ENCODE measurements at regions of chr6 and their contacts with region 1.

Region 1: DNA sequence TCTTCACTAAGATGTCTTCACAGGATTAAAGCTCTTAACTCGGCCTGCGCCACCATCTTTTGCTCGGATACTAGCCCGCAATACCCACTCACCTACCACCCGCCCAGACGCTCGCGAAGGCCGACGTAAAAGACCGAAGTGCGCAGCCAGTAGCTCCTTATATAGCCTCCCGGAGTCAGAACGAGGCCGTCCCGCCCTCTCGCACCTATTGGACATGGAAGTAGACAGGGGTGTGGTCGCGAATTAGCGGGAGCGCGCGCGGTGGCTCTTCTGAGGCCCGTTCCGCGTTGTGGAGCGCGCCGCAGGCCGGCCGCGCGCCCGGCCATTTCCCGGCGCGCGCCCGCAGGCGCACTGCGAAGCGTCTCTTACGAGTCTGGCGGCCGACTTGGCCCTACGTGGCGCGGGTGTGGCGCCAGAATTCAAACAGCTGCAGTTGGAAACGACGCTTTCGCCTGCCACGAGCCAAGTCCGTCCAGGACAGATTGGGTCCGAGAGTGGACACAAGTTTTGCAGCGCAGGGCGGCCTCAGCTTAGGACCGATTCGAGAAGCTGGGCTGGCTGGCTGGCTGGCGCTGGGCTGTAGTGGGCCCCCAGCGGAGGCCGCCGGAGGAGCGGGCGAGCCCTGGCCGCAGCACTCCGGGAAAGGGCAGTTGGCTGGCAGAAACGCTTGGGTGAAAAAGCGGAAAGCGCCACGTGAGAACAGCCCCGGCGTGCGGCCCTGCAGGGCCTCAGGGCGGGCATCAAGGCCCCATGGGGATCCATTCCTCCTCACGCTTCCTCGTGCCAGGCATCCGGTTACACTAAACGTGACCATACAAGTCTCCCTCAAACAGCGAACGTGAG is 36.1 kb upstream of the SYNCRIP start:
- DNase-seq: peak; percentile 80 to 98
- ATAC-seq: peak; percentile 87 to 89
- H3K4me3 ChIP-seq: peak overlapping the region; percentile 97
- H3K27ac ChIP-seq: peak overlapping the region; percentile 94 to 97
- H3K4me1 ChIP-seq: peaks cover 23% of the 10 kb centered on the region; the same call in 2 of the 3 replicates
- CTCF ChIP-seq: no peak
- EP300 ChIP-seq: no peak
- POLR2A ChIP-seq: peak; percentile 99
- RAD21 ChIP-seq: no peak

Region 2: GRCh38 chr6:85360794-85361642 is 317.8 kb before region 1 on chr6:
- CTCF ChIA-PET with region 1: no interaction called
- POLR2A ChIA-PET with region 1: interaction called, 11 read pairs
- DNase-seq: peak; percentile 53 to 88
- ATAC-seq: peak; percentile 98 to 99
- H3K4me3 ChIP-seq: no peak overlapping the region
- H3K27ac ChIP-seq: peak overlapping the region; percentile 75 to 81
- H3K4me1 ChIP-seq: peaks cover 44% of the 10 kb centered on the region
- CTCF ChIP-seq: no peak
- EP300 ChIP-seq: no peak
- POLR2A ChIP-seq: no peak
- RAD21 ChIP-seq: peak in 1 of 2 experiments; percentile 5; a peak in 2 of 5 replicates

Region 3: DNA sequence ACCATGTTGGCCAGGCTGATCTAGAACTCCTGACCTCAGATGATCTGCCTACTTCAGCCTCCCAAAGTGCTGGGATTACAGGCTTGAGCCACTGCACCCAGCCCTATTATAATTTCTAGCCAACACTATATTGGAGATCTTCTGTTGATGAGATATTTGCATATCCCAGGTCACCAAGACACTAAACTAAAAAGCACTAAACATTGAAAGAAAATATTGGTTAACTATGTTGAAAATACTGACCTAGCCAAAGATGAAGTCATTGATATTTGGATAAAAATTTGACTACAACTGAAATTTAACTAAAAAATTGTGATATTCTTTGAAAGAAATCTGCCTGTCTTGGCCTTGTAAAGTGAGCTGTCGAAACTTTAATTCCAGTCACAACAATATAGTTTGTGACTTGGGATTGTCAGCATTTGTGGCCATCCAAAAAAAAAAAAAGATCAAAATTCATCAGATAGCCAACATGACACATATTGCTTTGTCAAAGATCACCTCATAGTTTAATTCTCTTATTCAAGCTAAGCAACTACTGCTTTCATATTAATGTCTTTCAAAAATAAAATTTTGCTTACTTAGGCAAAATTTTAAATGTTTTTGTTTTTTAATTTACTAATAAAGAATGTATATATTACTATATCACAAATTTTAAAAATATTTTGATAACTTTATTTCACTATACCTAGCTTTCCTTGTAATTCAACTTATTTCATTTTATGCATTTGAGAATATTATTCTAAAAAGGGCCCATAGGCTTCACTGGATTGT is 235.3 kb before region 1 on chr6:
- CTCF ChIA-PET with region 1: no interaction called
- POLR2A ChIA-PET with region 1: no interaction called
- DNase-seq: no peak
- ATAC-seq: no peak
- H3K4me3 ChIP-seq: no peak overlapping the region
- H3K27ac ChIP-seq: no peak overlapping the region
- H3K4me1 ChIP-seq: peaks cover 8% of the 10 kb centered on the region; the same call in 2 of the 3 replicates
- CTCF ChIP-seq: no peak
- EP300 ChIP-seq: no peak
- POLR2A ChIP-seq: no peak
- RAD21 ChIP-seq: no peak

Region 4: DNA sequence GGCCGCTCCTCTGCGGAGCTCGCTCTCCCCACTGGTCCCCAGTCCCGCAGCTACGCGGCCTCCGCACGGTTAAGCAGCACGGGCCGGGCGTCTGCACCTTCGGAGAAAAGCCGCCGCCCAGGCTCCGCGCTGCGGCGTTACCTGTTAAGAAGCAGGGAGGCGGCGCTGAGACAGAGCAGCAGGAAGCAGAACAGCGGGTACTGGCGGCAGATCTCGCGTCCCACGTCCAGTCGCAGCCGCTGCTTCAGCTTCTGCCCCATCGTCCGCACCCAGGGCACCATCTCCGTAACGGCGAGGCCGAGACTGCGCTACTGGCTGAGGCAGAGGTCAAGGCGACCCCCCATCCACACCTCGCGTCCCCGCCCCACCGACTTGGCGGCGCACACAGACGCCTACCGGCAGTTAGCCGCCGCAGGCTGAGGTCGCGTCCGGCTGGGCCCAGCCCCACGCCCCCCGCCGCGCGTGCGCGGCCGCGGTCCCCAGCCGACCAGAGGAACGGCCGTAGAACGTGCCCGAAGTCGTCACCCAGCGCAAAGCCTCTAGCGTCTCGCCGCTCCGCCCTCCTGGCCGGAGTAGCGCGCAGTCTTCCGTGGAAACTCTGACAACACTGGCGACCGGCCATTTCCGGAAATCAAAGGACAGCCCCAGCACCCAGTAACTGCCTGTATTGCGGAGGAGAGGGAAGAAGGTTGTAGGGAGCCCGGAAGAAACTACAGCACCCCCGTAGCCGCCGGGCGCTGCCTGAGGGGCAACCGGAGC is 85.2 kb before region 1 on chr6 and contains the start of gene SNX14:
- CTCF ChIA-PET with region 1: no interaction called
- POLR2A ChIA-PET with region 1: interaction called, 18 read pairs
- DNase-seq: peak; percentile 76 to 92
- ATAC-seq: peak; percentile 91 to 95
- H3K4me3 ChIP-seq: peak within 1 kb of the TSS; percentile 77
- H3K27ac ChIP-seq: peak within 1 kb of the TSS; percentile 95
- H3K4me1 ChIP-seq: peaks cover 16% of the 10 kb centered on the region
- CTCF ChIP-seq: no peak
- EP300 ChIP-seq: no peak
- POLR2A ChIP-seq: peak; percentile 82
- RAD21 ChIP-seq: peak in 1 of 2 experiments; percentile 24; a peak in 1 of 5 replicates
- polyA plus RNA-seq, gene SNX14: 79.8 and 113 TPM in 2 replicates

Region 5: DNA sequence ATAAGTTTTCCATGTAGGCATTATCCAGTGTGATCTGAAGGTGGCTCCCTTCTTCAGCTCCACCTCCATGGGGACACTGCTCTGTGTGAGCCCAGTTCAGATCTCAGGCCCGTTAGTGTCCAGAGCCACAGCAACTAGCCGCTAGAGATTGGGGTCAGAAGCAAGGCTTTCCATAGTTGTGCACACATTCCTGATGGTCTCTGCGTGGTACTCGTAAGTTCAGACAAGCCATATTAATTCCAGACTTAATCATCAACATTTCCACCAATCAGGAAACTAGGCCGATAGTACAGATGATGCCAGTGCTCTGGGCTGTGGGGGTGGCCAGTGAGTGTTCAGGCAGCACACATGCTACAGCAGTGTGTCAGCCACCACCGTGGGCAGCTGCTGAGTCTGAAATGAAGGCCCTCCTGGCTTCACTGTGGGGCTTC is 18.6 kb before region 1 on chr6:
- CTCF ChIA-PET with region 1: no interaction called
- POLR2A ChIA-PET with region 1: interaction called, 12 read pairs
- DNase-seq: peak; percentile 40 to 70
- ATAC-seq: peak; percentile 99
- H3K4me3 ChIP-seq: no peak overlapping the region
- H3K27ac ChIP-seq: peak overlapping the region; percentile 64 to 77
- H3K4me1 ChIP-seq: peaks cover 8% of the 10 kb centered on the region; the same call in 1 of the 3 replicates
- CTCF ChIP-seq: no peak; the same call in 2 of the 3 replicates
- EP300 ChIP-seq: no peak
- POLR2A ChIP-seq: no peak
- RAD21 ChIP-seq: peak in 1 of 2 experiments; percentile 25; a peak in 1 of 5 replicates